ENCODE measurements at regions of chr5 and their contacts with region 1.

Region 1: DNA sequence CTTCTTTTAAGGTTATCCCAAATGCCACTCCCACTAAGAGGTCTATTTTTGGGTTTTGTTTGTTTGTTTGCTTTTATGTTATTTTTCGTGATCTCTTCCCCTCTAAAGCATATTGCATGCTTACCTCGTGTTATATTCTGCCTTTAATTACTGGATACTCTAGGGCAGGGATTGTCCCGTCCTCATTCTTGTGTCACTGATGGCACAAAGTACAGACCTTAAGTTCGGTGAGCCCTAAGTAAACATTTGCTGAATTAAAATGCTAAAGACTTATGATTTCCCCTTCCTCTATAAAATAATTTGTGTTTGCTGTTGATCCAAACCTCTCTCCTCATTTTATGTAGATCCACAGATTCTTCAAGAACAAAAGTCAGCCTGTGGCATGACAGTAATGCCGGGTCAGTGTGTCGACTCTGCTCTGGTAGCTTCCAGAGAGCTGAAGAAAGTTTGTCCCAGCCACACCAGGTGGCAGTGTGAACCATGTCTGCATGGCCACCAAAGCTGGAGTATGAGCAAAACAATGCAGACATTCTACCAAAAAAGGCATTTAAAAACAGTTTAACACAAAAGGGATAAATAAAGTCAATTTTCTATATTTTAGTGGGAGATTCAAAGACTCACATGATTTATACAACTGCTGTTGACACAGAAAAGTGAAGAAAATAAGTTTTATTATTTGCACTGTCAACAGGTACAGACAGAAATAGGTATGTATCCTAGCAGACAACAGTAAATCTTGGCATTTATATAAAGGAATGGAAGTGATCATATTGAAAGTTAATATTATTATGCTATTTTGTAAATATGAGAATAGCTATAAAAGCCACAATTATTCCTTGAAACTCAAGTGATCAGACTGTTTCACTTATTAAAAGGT is 17.9 kb upstream of the POC5 start:
- DNase-seq: peak; percentile 16
- H3K4me3 ChIP-seq: no peak overlapping the region
- H3K27ac ChIP-seq: no peak overlapping the region
- H3K4me1 ChIP-seq: no peaks in the 10 kb centered on the region
- H3K27me3 ChIP-seq: no peaks in the 10 kb centered on the region
- CTCF ChIP-seq: peak; percentile 56 to 81

Region 2: DNA sequence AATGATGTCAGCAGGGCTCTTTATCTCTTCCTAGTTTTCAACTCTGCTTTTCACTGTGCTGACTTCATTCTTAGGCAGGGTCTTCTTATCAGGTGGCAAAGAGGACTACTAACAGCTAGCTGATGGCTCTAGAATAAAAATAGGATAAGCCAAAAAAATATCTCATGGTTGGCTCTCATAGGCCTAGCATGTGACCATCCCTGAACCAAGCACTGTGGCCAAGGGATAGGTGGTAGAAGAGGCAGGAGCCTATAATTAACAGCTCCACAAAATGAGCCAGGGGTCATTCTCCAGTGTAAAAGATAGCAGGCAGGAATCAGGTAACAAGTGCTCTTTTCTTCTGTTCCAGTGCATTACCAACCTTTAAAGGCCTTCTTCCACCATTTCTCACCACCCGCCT is 102.8 kb before region 1 on chr5:
- CTCF ChIA-PET with region 1: no interaction called
- dilution Hi-C with region 1: no loop called
- in situ Hi-C with region 1: no loop called
- intact Hi-C with region 1: no loop called
- DNase-seq: no peak
- H3K4me3 ChIP-seq: no peak overlapping the region
- H3K27ac ChIP-seq: no peak overlapping the region
- H3K4me1 ChIP-seq: no peaks in the 10 kb centered on the region
- H3K27me3 ChIP-seq: no peaks in the 10 kb centered on the region
- CTCF ChIP-seq: no peak

Region 3: GRCh38 chr5:75678155-75678554 is 57.0 kb before region 1 on chr5:
- CTCF ChIA-PET with region 1: no interaction called
- dilution Hi-C with region 1: no loop called
- in situ Hi-C with region 1: no loop called
- intact Hi-C with region 1: no loop called
- DNase-seq: no peak
- H3K4me3 ChIP-seq: no peak overlapping the region
- H3K27ac ChIP-seq: no peak overlapping the region
- H3K4me1 ChIP-seq: peaks cover 6% of the 10 kb centered on the region
- H3K27me3 ChIP-seq: no peaks in the 10 kb centered on the region
- CTCF ChIP-seq: no peak

Region 4: DNA sequence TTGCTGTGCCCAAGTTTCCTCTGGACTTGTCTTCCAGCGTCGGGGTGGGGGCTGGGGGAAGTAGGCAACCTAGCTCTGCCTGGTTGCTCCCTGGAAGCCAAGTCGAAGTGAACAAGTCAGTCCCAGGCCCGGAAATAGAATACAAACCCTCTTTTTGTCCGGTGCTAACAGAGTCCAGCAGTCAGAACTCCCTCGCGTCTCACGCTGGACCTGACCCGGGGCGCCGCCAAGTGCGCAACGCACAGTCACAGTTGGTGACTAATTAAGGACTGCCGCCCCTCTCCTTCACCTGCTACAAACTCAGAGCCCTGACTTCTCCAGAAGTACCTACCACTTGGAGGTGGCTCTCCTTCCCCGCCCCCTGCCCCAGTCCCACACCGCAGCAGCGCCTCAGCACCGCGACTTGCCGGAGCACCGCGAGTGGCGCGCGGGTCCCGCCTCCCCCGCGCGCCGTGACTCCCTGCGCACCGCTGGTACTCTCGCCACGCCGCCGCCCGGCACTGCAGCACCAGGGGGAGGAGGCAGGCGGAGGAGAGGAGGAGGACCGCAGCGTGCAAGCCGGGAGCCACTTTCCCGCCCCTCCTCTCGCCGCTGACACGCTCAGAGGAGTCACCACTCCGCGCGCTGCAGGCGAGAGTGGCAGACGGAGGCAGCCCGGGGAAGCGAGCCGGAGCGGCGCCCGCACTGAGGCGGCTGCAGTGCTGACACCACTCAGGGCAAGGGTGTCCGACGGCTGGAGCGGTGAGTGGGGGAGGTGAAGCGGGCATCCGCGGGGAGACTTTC is 347.8 kb after region 1 on chr5 and contains the start of gene SV2C:
- CTCF ChIA-PET with region 1: no interaction called
- dilution Hi-C with region 1: no loop called
- in situ Hi-C with region 1: no loop called
- intact Hi-C with region 1: no loop called
- DNase-seq: peak; percentile 21
- H3K4me3 ChIP-seq: no peak within 1 kb of the TSS
- H3K27ac ChIP-seq: no peak within 1 kb of the TSS
- H3K4me1 ChIP-seq: peaks cover 7% of the 10 kb centered on the region
- H3K27me3 ChIP-seq: peaks cover 56% of the 10 kb centered on the region
- CTCF ChIP-seq: no peak
- total RNA-seq, gene SV2C: under 0.01 to 0.26 TPM

Region 5: DNA sequence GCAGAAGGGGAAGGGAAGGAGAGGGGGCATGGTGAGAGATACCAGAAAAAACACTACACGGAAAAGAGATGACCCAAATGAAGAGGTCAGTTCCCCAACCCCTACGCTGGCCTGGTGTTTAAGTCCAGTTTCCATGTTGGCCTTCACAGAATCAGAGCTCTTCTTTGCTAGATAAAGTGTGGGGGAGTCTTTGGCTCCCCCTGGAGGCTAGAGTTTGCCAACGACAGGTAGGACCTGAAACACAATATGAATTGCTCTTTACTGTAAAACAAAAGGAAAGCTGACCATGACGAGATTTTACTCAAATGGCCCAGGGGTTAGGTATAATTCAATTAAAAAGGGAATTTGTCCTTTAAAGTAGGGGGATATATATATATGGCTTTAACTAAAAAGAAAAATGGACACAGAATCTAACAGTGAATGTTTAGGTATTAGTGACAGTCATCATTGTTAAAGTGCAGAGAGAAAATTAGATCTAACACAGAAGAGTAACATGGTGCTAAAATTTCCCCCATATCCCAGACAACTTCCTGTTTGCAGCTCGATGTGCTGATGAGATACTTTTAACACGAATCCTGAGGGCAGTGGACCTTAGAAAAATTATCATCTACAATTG is 440.0 kb after region 1 on chr5:
- CTCF ChIA-PET with region 1: interaction called, 6 read pairs
- dilution Hi-C with region 1: no loop called
- in situ Hi-C with region 1: no loop called
- intact Hi-C with region 1: loop called (anchors 2 kb)
- DNase-seq: peak; percentile 34
- H3K4me3 ChIP-seq: no peak overlapping the region
- H3K27ac ChIP-seq: no peak overlapping the region
- H3K4me1 ChIP-seq: no peaks in the 10 kb centered on the region
- H3K27me3 ChIP-seq: no peaks in the 10 kb centered on the region
- CTCF ChIP-seq: peak; percentile 91 to 95

Region 6: DNA sequence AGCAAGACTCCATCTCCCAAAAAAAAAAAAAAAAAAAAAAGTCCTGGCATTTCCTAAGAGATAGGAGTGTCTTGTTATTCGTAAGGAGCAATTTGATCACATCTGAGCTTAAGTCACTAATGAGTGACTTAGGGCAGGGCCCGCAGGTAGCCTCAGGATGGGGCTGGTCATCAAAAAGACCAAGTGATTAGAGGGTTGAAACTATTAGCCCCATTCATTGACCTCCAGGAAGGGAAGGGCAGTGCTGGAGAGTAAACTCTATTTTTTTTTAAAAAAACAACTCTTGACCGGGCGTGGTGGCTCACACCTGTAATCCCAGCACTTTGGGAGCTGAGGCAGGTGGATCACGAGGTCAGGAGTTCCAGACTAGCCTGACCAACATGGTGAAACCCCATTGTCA is 621.7 kb after region 1 on chr5:
- CTCF ChIA-PET with region 1: no interaction called
- dilution Hi-C with region 1: no loop called
- in situ Hi-C with region 1: no loop called
- intact Hi-C with region 1: no loop called
- DNase-seq: no peak
- H3K4me3 ChIP-seq: no peak overlapping the region
- H3K27ac ChIP-seq: no peak overlapping the region
- H3K4me1 ChIP-seq: no peaks in the 10 kb centered on the region
- H3K27me3 ChIP-seq: no peaks in the 10 kb centered on the region
- CTCF ChIP-seq: no peak

Region 7: DNA sequence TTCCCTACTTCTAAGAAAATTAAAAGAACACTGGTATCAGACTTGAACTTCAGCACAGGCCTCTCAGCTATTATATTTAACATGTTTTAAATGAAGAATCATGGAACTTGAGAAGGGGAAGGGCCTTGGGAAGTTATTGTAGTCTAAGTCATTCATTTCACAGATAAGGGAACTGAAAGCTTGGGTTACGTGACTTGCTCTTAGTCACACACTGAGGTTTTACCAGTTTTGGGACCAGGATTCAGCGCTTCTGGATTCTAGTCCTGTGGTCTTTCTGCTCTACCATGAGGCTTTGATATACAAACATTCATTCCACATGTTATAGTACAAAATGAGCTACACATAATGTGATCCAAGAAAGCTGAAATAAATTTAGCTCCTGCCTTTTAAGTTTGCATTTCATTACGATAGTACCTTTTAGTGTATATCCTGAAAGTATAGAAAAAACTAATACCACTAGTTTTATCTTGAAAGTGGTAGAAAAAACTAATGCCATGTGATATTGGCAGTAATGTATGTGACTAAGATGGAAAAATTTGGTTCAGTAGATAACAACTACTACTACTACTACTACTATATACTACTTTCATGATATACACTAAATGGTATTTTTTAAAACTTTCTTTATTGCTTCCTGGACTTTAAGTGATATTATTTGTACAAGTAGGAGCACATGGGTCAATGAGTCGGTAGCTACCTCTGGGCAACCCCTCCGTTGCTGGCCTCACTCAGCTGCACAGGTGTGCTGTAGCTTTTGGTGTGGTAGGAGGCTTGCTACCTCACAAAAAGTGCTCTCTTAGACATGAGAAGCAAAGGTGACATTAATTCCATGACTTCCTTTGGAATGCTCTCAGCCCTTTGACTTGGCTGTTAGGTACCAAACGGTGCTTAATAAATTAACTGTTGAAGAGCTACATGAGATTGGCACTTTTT is 847.3 kb after region 1 on chr5:
- CTCF ChIA-PET with region 1: interaction called, 4 read pairs
- dilution Hi-C with region 1: no loop called
- in situ Hi-C with region 1: no loop called
- intact Hi-C with region 1: loop called (anchors 5 kb)
- DNase-seq: peak; percentile 6
- H3K4me3 ChIP-seq: no peak overlapping the region
- H3K27ac ChIP-seq: no peak overlapping the region
- H3K4me1 ChIP-seq: no peaks in the 10 kb centered on the region
- H3K27me3 ChIP-seq: no peaks in the 10 kb centered on the region
- CTCF ChIP-seq: no peak

Measured in mammary epithelial cell (primary cell).